ENCODE measurements at regions of chr2 and their contacts with region 1.

Region 1: DNA sequence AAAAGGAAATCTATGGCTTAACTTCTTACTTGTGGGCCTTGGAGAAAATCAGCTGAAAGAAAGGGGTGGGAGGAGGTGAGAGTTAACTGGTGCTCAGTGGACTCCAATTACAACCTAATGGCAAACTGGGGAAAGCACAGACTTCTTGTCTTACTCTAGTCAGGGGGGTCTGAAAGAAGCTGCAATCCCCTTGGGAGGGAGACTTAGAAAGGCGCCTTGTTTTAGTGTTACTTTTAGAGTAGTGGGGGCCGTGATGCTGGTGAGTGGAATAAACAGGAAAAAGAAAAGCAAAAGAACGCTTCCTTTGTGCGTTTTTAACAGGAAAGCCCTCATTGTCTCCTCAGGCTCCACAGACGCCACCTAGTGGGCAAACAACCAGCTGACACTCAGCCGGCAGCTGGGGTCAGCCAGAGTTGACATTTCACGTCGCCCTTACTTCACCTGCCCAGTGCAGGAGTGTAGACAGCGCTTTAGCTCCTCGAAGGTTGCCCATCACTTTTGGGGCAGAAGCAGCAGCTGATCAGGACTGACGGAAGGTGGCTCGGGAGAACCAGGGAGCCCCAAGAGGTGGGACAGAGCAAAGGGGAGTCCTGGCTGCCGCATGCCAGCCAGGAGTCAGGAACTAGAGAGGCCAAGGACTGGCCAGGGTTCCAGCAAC is 55.9 kb upstream of the GORASP2 start:
- DNase-seq: peak; percentile 94
- H3K4me3 Mint-ChIP-seq: peak overlapping the region; percentile 81
- H3K27ac Mint-ChIP-seq: peak overlapping the region; percentile 85
- H3K4me1 Mint-ChIP-seq: peaks cover 19% of the 10 kb centered on the region
- H3K27me3 Mint-ChIP-seq: peaks cover 11% of the 10 kb centered on the region

Region 2: DNA sequence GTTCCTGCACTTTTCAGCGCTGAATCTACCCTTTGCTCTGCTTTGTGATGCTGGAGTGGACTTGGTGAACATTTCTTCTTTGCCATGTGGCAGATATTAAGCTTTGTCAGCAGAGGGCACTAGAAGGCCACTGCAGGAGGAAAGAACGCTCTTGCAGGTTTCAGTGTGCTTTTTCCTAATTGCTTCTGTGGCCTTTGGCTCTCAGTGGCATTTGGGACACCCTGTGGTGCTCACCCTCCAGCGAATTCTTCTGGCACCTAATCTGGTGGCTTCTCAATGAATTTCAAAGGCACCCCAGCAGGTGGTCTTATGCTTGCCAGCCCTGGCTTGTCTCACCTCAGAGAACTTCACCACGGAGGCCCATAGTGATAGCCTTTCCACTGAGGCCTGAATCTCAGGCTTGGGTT is 548.5 kb before region 1 on chr2:
- intact Hi-C with region 1: loop called (anchors 5 kb)
- DNase-seq: peak; percentile 85
- H3K4me3 Mint-ChIP-seq: no peak overlapping the region
- H3K27ac Mint-ChIP-seq: no peak overlapping the region
- H3K4me1 Mint-ChIP-seq: no peaks in the 10 kb centered on the region
- H3K27me3 Mint-ChIP-seq: peaks cover 6% of the 10 kb centered on the region

Region 3: DNA sequence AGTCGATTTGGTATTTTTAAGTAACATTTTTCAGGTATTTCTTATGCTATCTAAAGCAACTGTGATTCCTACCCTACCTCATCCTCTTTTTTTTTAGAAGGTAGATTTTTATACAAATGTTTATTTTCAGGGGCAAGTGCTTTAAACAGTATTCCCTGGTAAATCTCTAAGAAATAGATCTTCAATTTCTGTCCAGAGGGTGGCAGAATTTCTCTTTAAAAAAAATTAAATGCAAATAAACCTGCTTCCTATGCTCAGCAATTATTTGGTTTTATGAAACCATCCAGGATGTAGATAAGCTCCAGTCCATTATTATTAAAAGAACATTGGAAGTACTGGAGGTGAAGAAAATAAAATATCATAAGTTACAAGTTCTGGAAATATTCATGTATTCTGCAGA is 503.3 kb before region 1 on chr2:
- intact Hi-C with region 1: loop called (anchors 2 kb)
- DNase-seq: no peak
- H3K4me3 Mint-ChIP-seq: no peak overlapping the region
- H3K27ac Mint-ChIP-seq: no peak overlapping the region
- H3K4me1 Mint-ChIP-seq: peaks cover 44% of the 10 kb centered on the region
- H3K27me3 Mint-ChIP-seq: peaks cover 14% of the 10 kb centered on the region

Region 4: DNA sequence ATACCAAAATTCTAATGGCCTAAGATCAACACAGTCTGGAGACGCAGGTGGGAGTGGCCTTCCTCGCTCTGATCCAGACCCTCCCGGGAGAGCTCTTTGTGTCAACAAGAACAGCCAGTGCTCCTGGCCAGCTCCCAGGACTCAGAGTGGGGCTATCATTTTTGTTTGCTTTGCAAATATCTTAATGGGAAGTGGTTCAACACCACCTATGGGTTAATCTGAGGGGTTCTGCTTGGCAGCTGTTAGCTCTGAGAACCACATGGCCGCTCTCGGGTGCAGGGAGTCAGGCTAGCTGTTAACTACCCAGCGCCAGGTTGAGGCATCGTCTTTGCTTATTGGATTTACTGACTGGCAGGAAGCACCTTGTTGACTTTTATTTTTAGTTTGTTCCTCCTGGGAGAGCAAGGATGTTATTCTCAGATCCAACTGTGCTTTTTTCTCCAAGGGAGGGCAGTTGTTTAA is 342.8 kb before region 1 on chr2:
- intact Hi-C with region 1: no loop called
- DNase-seq: no peak
- H3K4me3 Mint-ChIP-seq: no peak overlapping the region
- H3K27ac Mint-ChIP-seq: no peak overlapping the region
- H3K4me1 Mint-ChIP-seq: no peaks in the 10 kb centered on the region
- H3K27me3 Mint-ChIP-seq: peaks cover 26% of the 10 kb centered on the region

Region 5: GRCh38 chr2:170829036-170829435 is 44.1 kb before region 1 on chr2:
- intact Hi-C with region 1: no loop called
- DNase-seq: no peak
- H3K4me3 Mint-ChIP-seq: no peak overlapping the region
- H3K27ac Mint-ChIP-seq: no peak overlapping the region
- H3K4me1 Mint-ChIP-seq: peaks cover 3% of the 10 kb centered on the region
- H3K27me3 Mint-ChIP-seq: peaks cover 43% of the 10 kb centered on the region

Region 6: GRCh38 chr2:171034315-171034714 is 161.2 kb after region 1 on chr2:
- intact Hi-C with region 1: no loop called
- DNase-seq: no peak
- H3K4me3 Mint-ChIP-seq: no peak overlapping the region
- H3K27ac Mint-ChIP-seq: peak overlapping the region; percentile 6
- H3K4me1 Mint-ChIP-seq: peaks cover 10% of the 10 kb centered on the region
- H3K27me3 Mint-ChIP-seq: no peaks in the 10 kb centered on the region

Region 7: DNA sequence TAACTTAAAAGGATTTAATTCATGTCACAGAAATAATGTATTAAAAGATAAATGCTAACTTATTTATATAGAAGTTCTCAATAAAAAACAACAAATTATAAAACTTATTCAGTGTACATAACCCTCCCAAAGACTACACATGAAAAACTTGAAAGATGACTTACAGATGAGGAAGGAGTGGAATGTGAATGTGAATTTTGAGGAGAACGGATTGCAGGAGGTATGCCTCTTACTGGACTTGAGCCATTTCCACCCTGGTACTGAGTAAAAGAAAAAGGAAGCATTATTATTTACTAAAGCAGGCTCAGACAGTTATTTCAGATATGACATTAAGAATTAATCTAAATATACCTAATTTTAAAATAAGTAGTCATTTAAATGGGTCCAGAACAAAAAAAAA is 183.1 kb after region 1 on chr2:
- intact Hi-C with region 1: no loop called
- DNase-seq: no peak
- H3K4me3 Mint-ChIP-seq: no peak overlapping the region
- H3K27ac Mint-ChIP-seq: no peak overlapping the region
- H3K4me1 Mint-ChIP-seq: no peaks in the 10 kb centered on the region
- H3K27me3 Mint-ChIP-seq: no peaks in the 10 kb centered on the region